ENCODE measurements at regions of chr7 and their contacts with region 1.

Region 1: GRCh38 chr7:135170274-135170997 is at the start of gene CYREN:
- DNase-seq: peak; percentile 94 to 95
- H3K4me3 ChIP-seq: peak within 1 kb of the TSS; percentile 76 to 87 (median 76)
- H3K27ac ChIP-seq: peak within 1 kb of the TSS; percentile 58 to 95 (median 92)
- H3K4me1 ChIP-seq: peaks cover 20 to 44% of the 10 kb centered on the region in 2 donors
- H3K27me3 ChIP-seq: no peaks in the 10 kb centered on the region
- CTCF ChIP-seq: peak in 5 of 6 experiments; percentile 32 to 76 (median 61)
- POLR2A ChIP-seq: peak in 1 of 2 donors; percentile 78
- total RNA-seq, gene CYREN: 40.3 to 54.4 (median 46.8) TPM

Region 2: DNA sequence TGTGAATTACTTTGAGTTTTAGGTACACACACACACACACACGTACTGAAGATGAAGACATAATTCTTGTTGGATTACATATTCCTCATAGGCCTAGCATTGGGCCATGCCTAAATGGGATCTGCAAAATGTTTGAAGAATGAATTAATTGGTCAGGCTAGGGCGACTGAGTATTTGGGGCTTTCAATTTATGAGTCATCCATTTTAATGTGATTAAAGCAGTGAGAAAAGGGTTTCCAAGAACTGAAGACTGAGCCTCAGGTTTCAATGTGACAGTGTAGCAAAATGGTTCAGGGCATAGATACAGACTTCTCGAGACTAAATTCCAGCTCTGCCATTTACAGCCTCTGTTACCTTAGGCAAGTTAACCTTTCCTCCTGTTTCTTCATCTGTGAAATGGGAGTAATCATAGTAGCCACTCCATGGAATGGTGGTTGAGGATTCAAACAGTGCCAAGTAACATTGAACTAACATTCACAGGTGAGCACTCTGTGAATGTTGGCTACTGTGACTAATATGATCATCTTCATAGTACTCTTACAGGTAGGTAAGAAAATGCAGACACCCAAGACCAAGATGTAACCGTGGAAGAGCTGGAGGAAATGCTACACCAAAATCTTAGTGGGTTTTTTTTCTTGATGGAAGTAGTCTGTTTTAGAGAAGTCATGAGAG is 516.2 kb before region 1 on chr7:
- intact Hi-C with region 1: loop called (anchors 10 kb)
- DNase-seq: no peak
- H3K4me3 ChIP-seq: no peak overlapping the region
- H3K27ac ChIP-seq: no peak overlapping the region
- H3K4me1 ChIP-seq: no peaks in the 10 kb centered on the region
- H3K27me3 ChIP-seq: no peaks in the 10 kb centered on the region
- CTCF ChIP-seq: no peak
- POLR2A ChIP-seq: no peak

Region 3: DNA sequence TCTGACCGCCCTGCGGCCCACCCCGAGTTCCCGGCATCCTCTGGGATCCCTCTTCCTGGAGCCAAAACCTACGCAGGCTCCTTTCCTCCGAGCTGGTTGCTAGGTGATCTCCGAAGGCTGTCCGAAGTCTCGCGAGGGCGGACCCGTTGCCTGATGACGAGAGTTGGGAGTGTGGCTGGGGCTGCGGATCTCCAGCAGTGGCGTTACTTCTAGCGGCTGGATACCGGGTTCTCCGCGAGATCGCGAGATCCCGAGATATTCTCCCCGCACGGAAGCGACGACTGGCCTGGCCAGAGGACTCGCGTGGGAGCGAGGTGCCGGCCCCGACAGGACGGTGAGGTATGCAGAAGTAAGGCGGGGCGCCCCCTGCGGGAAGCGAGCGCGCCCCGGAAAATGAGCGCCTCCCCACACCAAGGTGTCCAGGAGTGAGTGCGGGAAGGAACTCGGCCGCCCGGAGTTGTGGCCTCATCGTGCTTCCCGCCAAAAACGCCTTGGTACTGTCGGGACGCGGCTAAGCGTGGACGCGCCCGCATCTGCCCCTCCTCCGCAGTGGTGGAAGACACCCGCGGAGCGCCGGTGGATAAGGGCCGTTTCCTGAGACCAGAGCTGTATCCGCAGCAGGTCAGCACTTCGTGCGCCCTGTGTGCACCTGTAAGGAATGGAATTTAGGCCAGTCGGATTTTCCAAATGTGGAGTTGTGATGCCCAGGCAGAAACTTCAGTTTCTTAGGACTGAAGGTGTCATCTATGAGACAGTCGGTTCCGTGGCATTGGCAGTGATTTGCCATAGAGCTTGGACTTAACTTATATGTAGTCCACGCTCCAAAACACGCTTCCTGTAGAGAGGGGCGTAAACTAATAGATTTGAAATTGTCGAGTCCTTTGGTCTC is 183.8 kb before region 1 on chr7 and contains the start of gene AGBL3:
- intact Hi-C with region 1: loop called (anchors 5 kb)
- DNase-seq: peak; percentile 94 to 97
- H3K4me3 ChIP-seq: peak within 1 kb of the TSS; percentile 12 to 66 (median 58)
- H3K27ac ChIP-seq: peak within 1 kb of the TSS; percentile 45 to 89 (median 86)
- H3K4me1 ChIP-seq: peaks cover 6% of the 10 kb centered on the region in 2 donors
- H3K27me3 ChIP-seq: no peaks in the 10 kb centered on the region
- CTCF ChIP-seq: peak in 5 of 6 experiments; percentile 11 to 74 (median 57)
- POLR2A ChIP-seq: peak in 1 of 2 donors; percentile 71
- total RNA-seq, gene AGBL3: 3.6 to 5.0 (median 4.1) TPM

Region 4: DNA sequence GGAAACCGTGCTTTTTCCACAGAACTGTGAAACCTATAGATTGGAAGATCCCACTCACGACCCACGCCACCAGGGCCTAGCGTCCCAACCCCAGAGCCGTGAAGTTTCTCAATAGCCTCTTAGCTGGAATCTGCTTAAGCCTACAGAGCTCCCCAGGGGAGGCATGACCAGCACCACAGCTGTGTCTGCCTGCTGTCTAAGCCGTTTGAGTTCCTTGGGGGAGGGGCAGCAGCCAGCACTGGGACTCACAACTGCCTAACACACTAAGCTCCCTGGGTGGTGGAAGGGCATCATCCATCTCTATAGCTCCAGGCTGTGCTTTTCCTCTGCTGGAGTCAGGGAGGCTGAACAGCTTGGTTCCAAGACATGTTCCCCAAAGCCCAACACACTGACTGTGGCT is 48.6 kb before region 1 on chr7:
- intact Hi-C with region 1: no loop called
- DNase-seq: no peak
- H3K4me3 ChIP-seq: no peak overlapping the region
- H3K27ac ChIP-seq: no peak overlapping the region
- H3K4me1 ChIP-seq: no peaks in the 10 kb centered on the region
- H3K27me3 ChIP-seq: no peaks in the 10 kb centered on the region
- CTCF ChIP-seq: no peak
- POLR2A ChIP-seq: no peak